ENCODE measurements at regions of chr10 and their contacts with region 1.

Region 1: DNA sequence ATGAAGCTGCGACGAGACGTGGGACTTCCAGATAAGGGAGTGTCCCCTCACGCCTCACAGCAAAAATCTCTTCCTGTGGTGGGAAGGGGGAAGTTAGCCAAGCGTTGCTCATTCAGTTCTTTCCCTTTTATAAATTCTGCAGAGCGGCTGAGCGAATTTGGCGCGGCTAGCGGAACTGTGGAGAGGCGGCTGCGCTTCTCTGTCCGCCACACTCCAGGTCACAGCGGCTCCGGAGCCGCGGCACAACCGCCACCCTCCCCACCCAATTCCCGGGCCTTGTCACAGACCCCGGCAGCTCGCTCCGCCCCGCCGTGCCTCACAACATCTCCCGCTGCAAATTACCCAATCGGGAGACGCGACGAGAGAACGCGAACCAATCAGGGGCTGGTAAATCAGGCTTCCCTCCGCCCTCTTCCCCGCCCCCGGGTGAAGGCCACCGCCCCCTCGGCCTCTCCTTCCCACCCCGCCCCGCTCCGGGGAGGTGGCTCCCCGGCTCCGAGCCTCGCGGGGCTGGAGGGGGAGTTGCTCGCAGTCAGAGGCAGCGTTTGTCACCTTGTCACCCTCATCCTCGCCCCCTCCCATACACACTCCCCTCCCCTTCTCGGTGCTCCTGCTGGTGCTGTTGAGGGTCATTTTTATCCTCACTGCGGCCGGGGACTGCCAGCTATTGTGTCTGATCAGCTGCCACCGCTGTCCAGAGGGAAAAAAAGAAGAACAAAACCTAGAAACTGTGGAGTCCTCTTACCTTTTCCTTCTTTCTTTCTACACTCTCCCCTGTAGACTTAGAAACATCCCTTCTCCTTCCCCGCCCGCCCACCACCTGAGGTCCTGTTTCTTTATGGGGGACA is 918 bp upstream of the ARHGAP21 start:
- DNase-seq: peak; percentile 97 to 98
- ATAC-seq: peak; percentile 82

Region 2: GRCh38 chr10:24952707-24953645 is 228.4 kb after region 1 on chr10:
- intact Hi-C with region 1: loop called in 1 of 2 experiments (anchors 10 kb)
- DNase-seq: peak; percentile 44 to 59
- ATAC-seq: peak; percentile 64

Region 3: GRCh38 chr10:24974976-24975375 is 250.4 kb after region 1 on chr10:
- intact Hi-C with region 1: no loop called
- DNase-seq: no peak
- ATAC-seq: peak; percentile 19

Measured in left colon (tissue), 2 donors.